Posterior cingulate gyrus (tissue), 11 donors: ENCODE measurements at regions of chr13 and their contacts with region 1.

Region 1: DNA sequence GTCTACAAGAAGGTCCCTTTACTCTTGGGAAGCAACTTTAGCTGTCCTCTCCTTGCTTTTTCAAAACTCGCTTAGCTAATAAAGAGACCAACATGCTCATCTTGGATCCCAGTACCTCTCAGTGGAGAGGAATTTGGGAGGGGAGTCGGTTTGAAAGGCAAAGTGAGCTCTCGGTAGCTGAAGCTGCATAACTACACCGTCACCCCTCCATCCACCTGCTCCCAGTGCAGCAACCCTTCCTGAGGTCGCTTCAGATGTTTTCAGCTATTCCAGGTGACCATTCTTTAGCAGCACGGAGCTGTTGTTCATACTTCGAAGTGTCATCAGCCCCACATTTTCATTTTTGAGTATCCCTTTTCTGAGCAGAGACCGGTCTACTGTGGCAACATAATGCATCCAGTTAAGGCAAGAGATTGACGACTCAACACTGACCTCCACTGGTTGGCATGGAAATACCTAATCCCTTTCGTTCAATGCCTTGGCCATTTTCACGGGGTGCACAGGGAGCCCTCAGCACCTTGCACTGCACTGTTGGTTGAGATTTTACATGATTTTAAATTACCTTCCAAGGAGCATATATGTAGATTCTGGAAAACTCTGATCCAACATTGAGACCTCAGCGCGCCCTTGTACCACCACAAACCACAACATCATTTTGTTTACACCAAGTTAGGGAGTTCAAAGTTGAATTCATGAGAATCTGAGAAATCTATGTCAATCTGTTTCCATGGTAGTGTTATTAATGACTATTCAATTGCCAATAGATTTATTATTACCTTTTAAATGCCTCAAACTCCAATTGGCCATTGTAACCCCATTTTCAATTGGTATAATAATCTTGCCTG is 42.2 kb downstream of the DLEU7 start:
- DNase-seq: peak in 6 of 10 donors; percentile 18 to 85 (median 65)

Region 2: GRCh38 chr13:49976314-49977258 is 824.7 kb before region 1 on chr13:
- intact Hi-C with region 1: loop called (anchors 10 kb)
- DNase-seq: peak; percentile 14 to 95 (median 74)

Region 3: GRCh38 chr13:50531917-50532899 is 269.1 kb before region 1 on chr13:
- intact Hi-C with region 1: loop called (anchors 5 kb)
- DNase-seq: no peak

Region 4: GRCh38 chr13:50685491-50685890 is 115.8 kb before region 1 on chr13:
- intact Hi-C with region 1: loop called (anchors 10 kb)
- DNase-seq: peak in 9 of 10 donors; percentile 42 to 94 (median 83)

Region 5: GRCh38 chr13:50911937-50912795 is 110.9 kb after region 1 on chr13:
- intact Hi-C with region 1: loop called (anchors 5 kb)
- DNase-seq: peak; percentile 72 to 97 (median 90)